ENCODE measurements at regions of chrX and their contacts with region 1.

Region 1: DNA sequence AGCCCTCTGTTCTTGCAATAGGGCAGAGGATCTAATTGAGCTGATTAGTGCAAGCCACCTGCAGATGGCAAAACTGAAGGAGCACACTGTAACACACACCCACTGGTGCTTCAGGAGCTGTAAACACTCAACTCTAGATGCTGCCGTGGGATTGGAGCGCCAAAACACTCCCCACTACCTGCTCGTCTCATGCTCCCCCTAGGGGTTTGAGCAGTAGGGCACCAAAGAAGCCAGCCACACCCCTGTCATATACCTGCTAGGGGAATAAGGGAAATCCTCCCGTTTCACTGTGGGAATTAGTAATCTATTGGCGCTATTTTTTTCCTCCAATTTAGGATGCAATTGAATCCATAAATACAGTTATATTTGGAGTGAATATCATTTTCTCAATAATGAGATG is 360.2 kb downstream of the GLUD2 start:
- DNase-seq: peak in 1 of 2 experiments; percentile 1
- H3K4me3 ChIP-seq: no peak overlapping the region
- H3K4me3 Mint-ChIP-seq: no peak overlapping the region
- H3K27ac Mint-ChIP-seq: no peak overlapping the region
- H3K4me1 ChIP-seq: no peaks in the 10 kb centered on the region
- H3K4me1 Mint-ChIP-seq: no peaks in the 10 kb centered on the region
- H3K27me3 ChIP-seq: no peaks in the 10 kb centered on the region
- H3K27me3 Mint-ChIP-seq: no peaks in the 10 kb centered on the region
- CTCF ChIP-seq: no peak

Region 2: DNA sequence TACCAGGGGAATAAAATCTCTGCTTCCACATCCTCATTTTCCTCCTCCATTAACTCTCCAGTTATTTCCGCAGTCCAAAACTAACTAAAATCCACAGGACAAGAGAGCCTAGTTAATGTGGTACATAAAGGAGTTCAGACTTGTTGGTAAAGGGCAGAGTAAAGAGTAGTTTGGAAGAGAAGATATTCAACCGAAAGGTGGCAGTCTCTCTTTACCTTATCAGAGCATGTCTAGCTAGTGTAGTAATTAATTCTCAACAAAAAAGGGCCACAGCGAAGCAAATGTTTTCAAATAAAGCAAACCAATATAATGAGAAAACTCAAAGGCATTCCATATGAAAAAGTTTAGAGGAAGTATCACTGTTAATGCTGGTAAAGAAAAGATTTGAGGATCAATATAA is 73.7 kb before region 1 on chrX:
- CTCF ChIA-PET with region 1: no interaction called
- POLR2A ChIA-PET with region 1: no interaction called
- intact Hi-C with region 1: loop called (anchors 2 kb)
- DNase-seq: no peak
- H3K4me3 ChIP-seq: no peak overlapping the region
- H3K4me3 Mint-ChIP-seq: no peak overlapping the region
- H3K27ac Mint-ChIP-seq: no peak overlapping the region
- H3K4me1 ChIP-seq: no peaks in the 10 kb centered on the region
- H3K4me1 Mint-ChIP-seq: no peaks in the 10 kb centered on the region
- H3K27me3 ChIP-seq: no peaks in the 10 kb centered on the region
- H3K27me3 Mint-ChIP-seq: no peaks in the 10 kb centered on the region
- CTCF ChIP-seq: no peak

Region 3: GRCh38 chrX:121365572-121366161 is 42.0 kb before region 1 on chrX:
- CTCF ChIA-PET with region 1: no interaction called
- POLR2A ChIA-PET with region 1: no interaction called
- intact Hi-C with region 1: no loop called
- DNase-seq: peak; percentile 0 to 31
- H3K4me3 ChIP-seq: no peak overlapping the region
- H3K4me3 Mint-ChIP-seq: peak overlapping the region; percentile 12
- H3K27ac Mint-ChIP-seq: no peak overlapping the region
- H3K4me1 ChIP-seq: no peaks in the 10 kb centered on the region
- H3K4me1 Mint-ChIP-seq: peaks cover 7% of the 10 kb centered on the region
- H3K27me3 ChIP-seq: no peaks in the 10 kb centered on the region
- H3K27me3 Mint-ChIP-seq: no peaks in the 10 kb centered on the region
- CTCF ChIP-seq: no peak

Region 4: GRCh38 chrX:121802881-121803412 is 395.3 kb after region 1 on chrX:
- CTCF ChIA-PET with region 1: no interaction called
- POLR2A ChIA-PET with region 1: no interaction called
- intact Hi-C with region 1: no loop called
- DNase-seq: no peak
- H3K4me3 ChIP-seq: no peak overlapping the region
- H3K4me3 Mint-ChIP-seq: no peak overlapping the region
- H3K27ac Mint-ChIP-seq: no peak overlapping the region
- H3K4me1 ChIP-seq: no peaks in the 10 kb centered on the region
- H3K4me1 Mint-ChIP-seq: no peaks in the 10 kb centered on the region
- H3K27me3 ChIP-seq: no peaks in the 10 kb centered on the region
- H3K27me3 Mint-ChIP-seq: no peaks in the 10 kb centered on the region
- CTCF ChIP-seq: no peak

Region 5: GRCh38 chrX:121921258-121921657 is 513.6 kb after region 1 on chrX:
- CTCF ChIA-PET with region 1: no interaction called
- POLR2A ChIA-PET with region 1: no interaction called
- intact Hi-C with region 1: no loop called
- DNase-seq: no peak
- H3K4me3 ChIP-seq: no peak overlapping the region
- H3K4me3 Mint-ChIP-seq: no peak overlapping the region
- H3K27ac Mint-ChIP-seq: no peak overlapping the region
- H3K4me1 ChIP-seq: peaks cover 5% of the 10 kb centered on the region; the same call in 1 of the 2 replicates
- H3K4me1 Mint-ChIP-seq: no peaks in the 10 kb centered on the region
- H3K27me3 ChIP-seq: no peaks in the 10 kb centered on the region
- H3K27me3 Mint-ChIP-seq: no peaks in the 10 kb centered on the region
- CTCF ChIP-seq: no peak

Measured in Caco-2 (cell line).